ENCODE measurements at regions of chr10 and their contacts with region 1.

Region 1: DNA sequence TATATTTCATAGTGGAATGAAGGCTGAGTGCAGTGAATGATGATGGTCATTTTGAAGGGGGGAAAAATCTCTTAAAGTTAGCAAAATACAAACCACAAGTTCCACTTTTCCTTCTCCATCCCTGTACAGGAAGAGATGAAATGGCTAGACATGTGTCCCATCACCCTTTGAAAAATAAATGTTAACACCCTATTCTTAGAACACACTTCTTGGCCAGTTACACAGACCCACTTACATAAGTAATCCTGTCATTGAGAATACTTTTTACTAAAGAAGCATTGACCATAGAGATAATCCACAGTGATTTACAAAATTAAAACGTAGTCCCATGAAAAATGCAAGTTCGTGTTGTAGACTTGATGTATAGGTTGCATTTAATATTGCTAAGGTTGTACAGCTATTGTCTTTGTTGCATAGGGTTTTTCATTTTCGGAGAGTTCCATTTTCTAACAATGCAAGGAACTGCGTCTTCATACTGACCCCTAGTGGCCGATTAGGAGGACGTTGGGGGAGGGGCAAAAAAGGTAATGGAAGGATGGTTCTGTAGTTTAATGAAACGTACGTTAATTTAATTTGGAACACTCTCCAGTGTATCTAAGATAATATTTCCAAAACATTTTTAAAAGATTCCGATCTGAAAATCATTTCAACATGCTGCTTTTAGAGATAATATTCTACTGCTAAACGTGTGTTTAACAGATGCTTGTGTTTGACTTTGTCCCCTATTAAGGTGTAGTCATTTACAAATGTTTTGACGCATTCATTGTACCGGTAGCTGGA is 60.9 kb downstream of the ARMC3 start:
- DNase-seq: peak; percentile 71 to 79 (median 77)
- H3K4me3 ChIP-seq: no peak overlapping the region
- H3K4me3 Mint-ChIP-seq: no peak overlapping the region
- H3K27ac ChIP-seq: no peak overlapping the region
- H3K27ac Mint-ChIP-seq: peak overlapping the region in 3 of 7 donors; percentile 6 to 68 (median 43)
- H3K4me1 ChIP-seq: peaks cover 13% of the 10 kb centered on the region
- H3K4me1 Mint-ChIP-seq: peaks cover 4 to 10% (median 9%) of the 10 kb centered on the region in 4 donors
- H3K27me3 ChIP-seq: no peaks in the 10 kb centered on the region
- H3K27me3 Mint-ChIP-seq: peaks cover 4 to 5% of the 10 kb centered on the region in 2 donors

Region 2: GRCh38 chr10:21495752-21496342 is 1492.9 kb before region 1 on chr10:
- CTCF ChIA-PET with region 1: interaction called, 12 read pairs
- POLR2A ChIA-PET with region 1: interaction called, 4 read pairs
- intact Hi-C with region 1: loop called (anchors 1 kb)
- DNase-seq: peak; percentile 73 to 92 (median 86)
- H3K4me3 ChIP-seq: peak overlapping the region; percentile 17 to 66
- H3K4me3 Mint-ChIP-seq: peak overlapping the region; percentile 82 to 93 (median 90)
- H3K27ac ChIP-seq: no peak overlapping the region
- H3K27ac Mint-ChIP-seq: peak overlapping the region in 1 of 7 donors; percentile 67
- H3K4me1 ChIP-seq: peaks cover 34% of the 10 kb centered on the region
- H3K4me1 Mint-ChIP-seq: peaks cover 12 to 36% (median 17%) of the 10 kb centered on the region in 4 donors
- H3K27me3 ChIP-seq: peaks cover 60% of the 10 kb centered on the region
- H3K27me3 Mint-ChIP-seq: peaks cover 42 to 51% of the 10 kb centered on the region in 2 donors

Region 3: GRCh38 chr10:22010973-22011408 is 977.8 kb before region 1 on chr10:
- CTCF ChIA-PET with region 1: interaction called, 91 read pairs
- POLR2A ChIA-PET with region 1: no interaction called
- intact Hi-C with region 1: loop called (anchors 1 kb)
- DNase-seq: peak in 4 of 5 donors; percentile 38 to 51 (median 44)
- H3K4me3 ChIP-seq: no peak overlapping the region
- H3K4me3 Mint-ChIP-seq: no peak overlapping the region
- H3K27ac ChIP-seq: no peak overlapping the region
- H3K27ac Mint-ChIP-seq: no peak overlapping the region
- H3K4me1 ChIP-seq: no peaks in the 10 kb centered on the region
- H3K4me1 Mint-ChIP-seq: peaks cover 0 to 4% (median under 1%) of the 10 kb centered on the region in 4 donors
- H3K27me3 ChIP-seq: no peaks in the 10 kb centered on the region
- H3K27me3 Mint-ChIP-seq: peaks cover 5 to 7% of the 10 kb centered on the region in 2 donors

Region 4: GRCh38 chr10:22420787-22421517 is 567.8 kb before region 1 on chr10:
- CTCF ChIA-PET with region 1: no interaction called
- POLR2A ChIA-PET with region 1: no interaction called
- intact Hi-C with region 1: loop called (anchors 1 kb)
- DNase-seq: peak in 4 of 5 donors; percentile 37 to 41 (median 39)
- H3K4me3 ChIP-seq: no peak overlapping the region
- H3K4me3 Mint-ChIP-seq: no peak overlapping the region
- H3K27ac ChIP-seq: no peak overlapping the region
- H3K27ac Mint-ChIP-seq: no peak overlapping the region
- H3K4me1 ChIP-seq: no peaks in the 10 kb centered on the region
- H3K4me1 Mint-ChIP-seq: no peaks in the 10 kb centered on the region
- H3K27me3 ChIP-seq: no peaks in the 10 kb centered on the region
- H3K27me3 Mint-ChIP-seq: no peaks in the 10 kb centered on the region

Region 5: DNA sequence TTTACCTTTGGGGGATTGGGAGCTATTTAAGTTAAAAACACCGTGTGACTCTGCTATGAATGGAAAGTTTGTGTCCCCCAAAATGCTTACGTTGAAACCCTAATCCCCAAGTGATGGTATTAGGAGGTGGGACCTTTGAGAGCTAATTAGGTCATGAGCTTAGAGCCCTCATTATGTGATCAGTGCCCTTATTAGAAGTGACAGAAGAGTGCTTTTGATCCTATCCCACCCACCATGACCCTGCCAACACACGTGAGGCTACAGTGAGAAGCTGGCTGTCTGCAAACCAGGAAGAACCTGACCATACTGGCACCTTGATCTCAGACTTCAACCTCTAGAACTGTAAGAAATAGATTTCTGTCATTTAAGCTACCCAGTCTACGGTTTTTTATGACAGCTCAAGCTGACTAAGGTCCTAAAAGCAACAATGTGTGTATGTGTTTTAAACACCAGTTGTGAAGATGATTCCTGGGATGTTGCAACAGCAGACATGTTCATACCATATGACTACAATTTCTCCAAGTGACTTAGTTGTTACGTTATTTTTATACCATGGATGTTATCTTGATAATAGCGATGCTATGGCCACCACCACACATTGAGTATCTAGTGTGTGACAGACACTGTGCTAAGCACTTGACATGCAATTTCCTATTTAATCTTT is 398.8 kb before region 1 on chr10:
- CTCF ChIA-PET with region 1: interaction called, 5 read pairs
- POLR2A ChIA-PET with region 1: no interaction called
- intact Hi-C with region 1: loop called (anchors 5 kb)
- DNase-seq: no peak
- H3K4me3 ChIP-seq: no peak overlapping the region
- H3K4me3 Mint-ChIP-seq: no peak overlapping the region
- H3K27ac ChIP-seq: no peak overlapping the region
- H3K27ac Mint-ChIP-seq: peak overlapping the region in 4 of 7 donors; percentile 35 to 86 (median 67)
- H3K4me1 ChIP-seq: peaks cover 26% of the 10 kb centered on the region
- H3K4me1 Mint-ChIP-seq: peaks cover 36 to 80% (median 56%) of the 10 kb centered on the region in 4 donors
- H3K27me3 ChIP-seq: no peaks in the 10 kb centered on the region
- H3K27me3 Mint-ChIP-seq: no peaks in the 10 kb centered on the region

Region 6: DNA sequence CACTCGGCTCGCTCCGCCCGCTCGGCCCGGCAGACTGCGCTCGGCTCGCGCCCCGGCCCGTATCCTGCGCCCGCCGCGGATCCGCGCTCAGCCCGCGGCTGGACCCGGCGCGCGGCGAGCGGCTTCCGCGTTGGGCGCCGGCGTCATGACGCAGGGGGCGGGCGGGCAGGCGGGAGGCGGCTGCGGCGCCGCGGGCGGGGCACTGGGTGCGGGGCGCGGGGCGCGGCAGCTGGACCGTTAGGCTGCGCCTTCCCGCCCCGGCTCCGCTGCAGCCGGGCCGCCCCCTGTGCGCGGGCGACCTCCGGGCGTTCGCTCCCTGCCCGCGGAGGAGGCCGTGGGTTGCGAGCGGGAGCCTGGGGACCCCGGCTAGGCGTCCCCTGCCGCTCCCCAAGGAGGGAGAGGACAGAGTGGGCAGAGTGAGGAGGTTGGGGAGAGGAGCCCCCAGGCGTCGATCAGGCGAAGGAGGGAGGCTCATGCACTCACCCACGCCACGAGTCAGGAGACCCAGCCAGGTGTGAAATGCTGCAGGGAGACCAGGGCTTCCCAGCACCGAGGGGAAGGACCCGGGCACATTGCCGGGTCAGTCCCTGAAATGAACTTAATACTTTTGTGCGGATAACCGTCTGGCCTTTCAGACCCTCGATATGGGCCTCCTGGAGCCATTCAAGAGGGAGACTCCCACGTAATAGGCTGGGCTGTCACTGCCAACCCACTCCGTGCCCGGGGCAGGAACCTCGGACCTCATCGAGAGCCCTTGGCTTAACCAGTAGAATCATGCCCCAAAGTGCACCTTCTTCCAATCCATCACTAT is 274.1 kb before region 1 on chr10 and contains the start of gene PIP4K2A:
- CTCF ChIA-PET with region 1: no interaction called
- POLR2A ChIA-PET with region 1: no interaction called
- intact Hi-C with region 1: loop called (anchors 10 kb)
- DNase-seq: peak; percentile 71 to 84 (median 81)
- H3K4me3 ChIP-seq: peak within 1 kb of the TSS; percentile 77 to 79
- H3K4me3 Mint-ChIP-seq: peak within 1 kb of the TSS; percentile 87 to 98 (median 96)
- H3K27ac ChIP-seq: peak within 1 kb of the TSS; percentile 88
- H3K27ac Mint-ChIP-seq: peak within 1 kb of the TSS; percentile 88 to 96 (median 92)
- H3K4me1 ChIP-seq: peaks cover 34% of the 10 kb centered on the region
- H3K4me1 Mint-ChIP-seq: peaks cover 28 to 40% (median 31%) of the 10 kb centered on the region in 4 donors
- H3K27me3 ChIP-seq: no peaks in the 10 kb centered on the region
- H3K27me3 Mint-ChIP-seq: no peaks in the 10 kb centered on the region
- total RNA-seq, gene PIP4K2A: 171 to 179 TPM

Region 7: DNA sequence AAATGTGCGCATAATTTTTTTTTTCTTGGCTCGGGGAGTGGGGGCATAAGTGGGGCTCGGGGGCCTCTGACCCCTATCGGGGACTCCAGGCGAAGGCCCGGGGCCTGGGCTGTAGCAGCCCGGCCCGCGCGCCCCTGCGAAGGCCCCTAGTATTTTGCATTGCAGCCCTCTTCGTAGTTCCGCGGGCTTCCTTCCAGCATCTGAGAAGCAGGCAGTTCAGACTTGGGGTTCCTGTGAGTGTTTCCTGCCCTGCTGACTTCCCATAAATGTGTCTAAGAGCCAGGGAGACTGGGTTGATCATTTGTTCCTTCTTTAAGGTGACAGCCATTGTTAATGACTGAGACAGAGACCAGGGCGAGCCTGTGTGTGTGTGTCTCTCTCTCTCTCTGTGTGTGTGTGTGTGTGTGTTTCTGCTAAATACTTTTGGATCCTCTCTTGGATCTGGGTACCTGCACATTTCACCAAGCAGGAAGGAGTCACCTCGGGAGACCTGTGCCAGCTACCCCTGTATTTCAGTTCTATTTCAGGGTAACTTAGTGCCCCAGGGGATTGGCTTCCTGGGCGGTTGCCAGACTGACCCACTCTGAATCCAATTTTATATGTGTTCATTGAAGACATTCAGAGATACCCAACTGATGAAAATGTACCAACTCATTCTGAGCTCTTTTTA is 107.3 kb after region 1 on chr10:
- CTCF ChIA-PET with region 1: no interaction called
- POLR2A ChIA-PET with region 1: no interaction called
- intact Hi-C with region 1: no loop called
- DNase-seq: peak in 4 of 5 donors; percentile 26 to 46 (median 33)
- H3K4me3 ChIP-seq: peak overlapping the region; percentile 18 to 56
- H3K4me3 Mint-ChIP-seq: peak overlapping the region; percentile 87 to 96 (median 91)
- H3K27ac ChIP-seq: peak overlapping the region; percentile 44
- H3K27ac Mint-ChIP-seq: peak overlapping the region; percentile 84 to 94 (median 91)
- H3K4me1 ChIP-seq: peaks cover 15% of the 10 kb centered on the region
- H3K4me1 Mint-ChIP-seq: peaks cover 28 to 49% (median 41%) of the 10 kb centered on the region in 4 donors
- H3K27me3 ChIP-seq: no peaks in the 10 kb centered on the region
- H3K27me3 Mint-ChIP-seq: no peaks in the 10 kb centered on the region